ENCODE measurements at regions of chr16 and their contacts with region 1.

Region 1: GRCh38 chr16:25051406-25052150 is 36.4 kb upstream of the ARHGAP17 start:
- DNase-seq: no peak
- ATAC-seq: peak; percentile 35 to 51 (median 50)
- H3K4me3 ChIP-seq: peak overlapping the region; percentile 17
- H3K27ac ChIP-seq: peak overlapping the region; percentile 87
- H3K4me1 ChIP-seq: peaks cover 23% of the 10 kb centered on the region
- H3K27me3 ChIP-seq: no peaks in the 10 kb centered on the region
- CTCF ChIP-seq: no peak

Region 2: DNA sequence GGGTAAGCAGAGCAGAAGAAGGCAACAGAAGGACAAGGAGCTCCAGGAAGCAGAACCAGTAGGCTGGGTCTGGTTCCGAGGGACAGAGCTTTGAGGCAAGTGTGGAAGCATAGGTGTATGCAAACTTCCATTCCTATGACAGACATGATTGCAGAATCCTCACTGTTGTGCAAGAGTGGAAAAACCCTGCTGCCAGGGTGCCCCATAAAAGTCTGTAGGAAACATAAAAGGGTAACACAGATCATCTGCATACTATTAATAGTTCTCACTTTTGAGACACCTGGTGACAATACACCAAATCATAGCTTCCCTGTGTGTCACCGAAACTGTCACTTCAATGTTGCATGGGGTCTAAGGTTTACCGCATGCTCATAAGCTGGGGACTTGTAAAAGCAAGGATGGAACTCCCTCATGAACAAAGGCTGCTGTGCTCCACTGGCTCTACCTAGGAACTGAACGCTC is 76.1 kb before region 1 on chr16:
- intact Hi-C with region 1: loop called in 1 of 2 experiments (anchors 5 kb)
- DNase-seq: no peak
- ATAC-seq: peak; percentile 43 to 67 (median 62)
- H3K4me3 ChIP-seq: no peak overlapping the region
- H3K27ac ChIP-seq: peak overlapping the region; percentile 67
- H3K4me1 ChIP-seq: peaks cover 51% of the 10 kb centered on the region
- H3K27me3 ChIP-seq: no peaks in the 10 kb centered on the region
- CTCF ChIP-seq: no peak

Region 3: DNA sequence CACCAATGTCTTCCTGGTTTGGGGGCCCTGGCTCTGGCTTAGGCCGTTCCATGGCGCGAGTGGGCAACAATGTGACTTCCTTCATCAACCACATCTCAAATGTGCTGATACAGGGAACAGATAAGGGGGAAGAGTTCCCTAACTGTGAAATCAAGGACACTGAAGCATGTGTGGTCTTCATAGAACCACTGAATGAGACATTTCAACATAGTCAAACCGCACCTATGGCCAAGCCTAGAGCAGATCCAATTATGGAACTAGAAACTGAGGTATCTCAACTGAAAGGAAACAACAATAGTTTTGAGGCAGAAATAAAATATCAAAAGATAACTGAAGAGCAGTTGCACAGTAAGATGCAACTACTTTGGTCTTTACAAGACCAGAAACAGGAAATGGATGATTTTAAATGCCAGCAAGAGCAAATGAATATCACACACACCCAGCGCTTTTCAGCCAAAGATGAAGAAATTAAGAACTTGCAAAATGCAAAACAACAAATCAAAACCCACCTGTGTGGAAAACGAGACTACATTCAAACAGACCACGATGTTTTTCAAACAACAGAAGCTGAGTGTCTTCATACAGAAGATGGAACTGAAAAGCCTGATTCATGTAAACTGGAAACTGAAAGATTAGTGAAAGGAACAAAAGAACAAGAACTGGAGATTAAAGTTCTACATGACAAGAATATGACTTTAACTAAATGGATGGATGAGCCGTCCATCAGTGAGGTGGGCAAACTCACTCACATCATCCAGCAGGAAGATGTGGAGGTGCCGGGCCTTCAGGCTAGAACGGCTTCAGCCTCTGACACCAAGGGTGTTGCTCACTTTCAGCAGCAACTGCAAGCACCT is 41.9 kb after region 1 on chr16:
- intact Hi-C with region 1: no loop called
- DNase-seq: no peak
- ATAC-seq: no peak
- H3K4me3 ChIP-seq: no peak overlapping the region
- H3K27ac ChIP-seq: no peak overlapping the region
- H3K4me1 ChIP-seq: no peaks in the 10 kb centered on the region
- H3K27me3 ChIP-seq: no peaks in the 10 kb centered on the region
- CTCF ChIP-seq: no peak

Region 4: DNA sequence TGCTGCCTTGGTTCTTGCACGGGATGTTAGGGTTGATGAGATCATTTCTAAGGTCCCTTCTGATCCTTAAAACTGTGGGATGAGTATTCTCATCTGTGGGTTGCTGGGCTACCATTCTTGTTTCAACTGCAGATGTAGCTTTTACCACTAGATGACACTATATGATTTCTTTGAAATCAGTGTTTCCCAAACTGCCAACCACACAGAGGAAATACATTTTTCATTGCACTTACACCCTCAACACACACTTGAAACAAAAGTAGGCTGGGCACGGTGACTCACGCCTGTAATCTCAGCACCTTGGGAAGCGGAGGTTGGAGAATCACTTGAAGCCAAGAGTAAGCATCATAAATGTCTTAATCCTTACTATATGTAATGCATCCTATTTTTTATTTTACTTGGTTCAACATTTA is 75.2 kb after region 1 on chr16:
- intact Hi-C with region 1: loop called in 1 of 2 experiments (anchors 1 kb)
- DNase-seq: no peak
- ATAC-seq: peak in 2 of 4 donors; percentile 19 to 32
- H3K4me3 ChIP-seq: no peak overlapping the region
- H3K27ac ChIP-seq: no peak overlapping the region
- H3K4me1 ChIP-seq: peaks cover 2% of the 10 kb centered on the region
- H3K27me3 ChIP-seq: no peaks in the 10 kb centered on the region
- CTCF ChIP-seq: peak; percentile 28

Region 5: DNA sequence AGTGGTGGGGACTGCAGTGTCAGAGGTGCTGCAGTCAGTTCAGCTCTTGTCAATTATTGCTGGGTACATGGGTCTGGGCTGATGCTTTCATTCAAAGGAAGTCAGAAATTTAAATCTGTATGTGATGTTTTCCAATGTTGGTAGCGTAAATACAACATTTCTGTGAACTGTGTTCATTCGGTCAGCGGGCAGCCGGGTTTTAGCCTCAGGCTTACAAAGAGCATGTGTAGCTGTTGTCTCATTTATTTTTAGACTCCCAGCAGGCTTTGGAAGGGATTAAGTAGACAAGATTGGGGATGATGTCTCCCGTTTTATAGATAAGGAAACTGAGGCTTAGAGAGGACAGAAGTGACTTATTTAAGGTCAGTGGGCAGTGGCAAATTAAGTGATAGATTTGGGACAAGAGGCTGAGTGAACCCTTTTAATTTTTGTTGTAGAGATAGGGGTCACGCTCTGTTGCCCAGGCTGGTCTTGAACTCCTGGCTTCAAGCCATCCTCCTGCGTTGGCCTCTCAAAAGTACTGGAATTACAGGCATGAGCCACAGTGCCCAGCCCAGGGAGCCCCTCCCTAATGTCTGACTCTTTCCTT is 173.2 kb after region 1 on chr16:
- intact Hi-C with region 1: loop called (anchors 2 to 5 kb)
- DNase-seq: no peak
- ATAC-seq: no peak
- H3K4me3 ChIP-seq: no peak overlapping the region
- H3K27ac ChIP-seq: no peak overlapping the region
- H3K4me1 ChIP-seq: no peaks in the 10 kb centered on the region
- H3K27me3 ChIP-seq: no peaks in the 10 kb centered on the region
- CTCF ChIP-seq: no peak

Measured in psoas muscle (tissue), 8 donors.